ENCODE measurements at regions of chr6 and their contacts with region 1.

Region 1: DNA sequence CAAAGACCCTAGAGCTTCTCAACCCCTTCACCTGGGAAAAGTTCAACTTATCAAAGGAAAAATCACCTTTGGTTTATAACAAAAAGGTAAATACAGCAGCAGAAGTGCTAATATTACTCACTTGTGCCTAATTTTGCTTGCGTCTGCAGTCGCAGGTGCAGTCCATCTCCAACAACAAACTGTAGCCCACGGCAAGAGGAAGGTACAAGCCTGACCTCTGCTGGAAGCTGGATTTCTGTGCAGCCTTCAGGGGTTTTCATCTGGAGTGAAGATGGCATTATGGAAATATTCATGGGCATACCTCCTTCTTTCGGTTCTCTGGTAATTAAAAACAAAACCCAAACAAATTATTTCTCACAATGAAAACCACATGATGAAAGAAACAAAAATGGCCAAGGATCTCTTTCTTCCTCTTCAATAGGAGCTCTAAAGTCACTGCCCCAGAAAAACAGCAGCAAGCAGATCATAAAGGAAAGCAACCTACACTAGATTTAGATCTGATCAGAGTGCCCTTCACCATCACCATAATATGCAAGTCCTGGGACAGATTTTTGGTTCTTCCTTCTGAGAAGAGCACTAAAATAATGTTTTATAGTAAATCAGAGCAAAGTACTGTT is 7.8 kb downstream of the UBE3D start:
- DNase-seq: no peak
- ATAC-seq: peak; percentile 87
- H3K4me3 ChIP-seq: no peak overlapping the region
- H3K27ac ChIP-seq: no peak overlapping the region
- H3K4me1 ChIP-seq: peaks cover 3% of the 10 kb centered on the region; the same call in 1 of the 2 replicates
- H3K27me3 ChIP-seq: no peaks in the 10 kb centered on the region
- CTCF ChIP-seq: peak; percentile 87

Region 2: GRCh38 chr6:82247634-82248232 is 810.1 kb before region 1 on chr6 and contains the start of gene IBTK:
- CTCF ChIA-PET with region 1: no interaction called
- POLR2A ChIA-PET with region 1: no interaction called
- in situ Hi-C with region 1: no loop called
- intact Hi-C with region 1: loop called (anchors 2 kb)
- DNase-seq: peak; percentile 85
- ATAC-seq: peak; percentile 92
- H3K4me3 ChIP-seq: peak within 1 kb of the TSS; percentile 65 to 99
- H3K27ac ChIP-seq: peak within 1 kb of the TSS; percentile 99
- H3K4me1 ChIP-seq: peaks cover 34% of the 10 kb centered on the region; the same call in 1 of the 2 replicates
- H3K27me3 ChIP-seq: no peaks in the 10 kb centered on the region
- CTCF ChIP-seq: no peak
- total RNA-seq, gene IBTK: 73.2 TPM

Region 3: DNA sequence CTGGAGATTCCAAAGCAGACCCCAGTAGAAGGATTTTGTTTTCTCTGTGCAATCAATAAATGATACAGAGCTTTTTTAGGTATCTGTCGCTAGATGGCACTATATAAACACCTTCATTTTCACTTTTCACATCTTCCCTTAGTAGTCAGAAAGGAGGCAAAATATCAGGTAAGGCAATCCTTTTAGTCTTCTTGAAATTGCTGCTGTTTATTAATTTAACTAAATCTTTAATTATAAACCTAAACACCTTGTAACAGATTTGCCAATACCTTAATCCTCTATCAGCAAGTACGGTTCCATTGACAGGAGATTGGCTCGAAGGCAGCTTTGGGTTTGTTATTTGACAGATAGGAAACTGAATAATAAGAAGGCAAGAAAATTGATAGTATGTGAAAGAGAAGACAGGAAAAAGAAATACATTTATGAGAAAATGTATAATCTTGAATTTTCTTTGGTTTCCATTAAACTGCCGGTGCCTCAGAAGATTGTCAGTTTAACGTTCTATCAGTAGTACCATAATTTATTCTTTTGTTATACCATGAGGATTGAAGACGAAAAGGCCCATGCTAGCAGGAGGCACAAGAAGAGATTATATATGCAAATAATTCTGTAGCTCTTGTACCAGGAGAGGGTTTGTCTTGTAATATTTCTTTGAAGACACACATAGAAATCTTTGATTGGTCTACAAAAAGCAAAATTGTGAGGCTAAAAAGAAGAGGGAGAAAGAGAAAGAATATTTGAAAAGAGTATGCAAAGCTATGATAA is 786.8 kb before region 1 on chr6:
- CTCF ChIA-PET with region 1: interaction called, 4 read pairs
- POLR2A ChIA-PET with region 1: no interaction called
- in situ Hi-C with region 1: no loop called
- intact Hi-C with region 1: loop called (anchors 5 kb)
- DNase-seq: no peak
- ATAC-seq: no peak; the same call in 1 of the 2 replicates
- H3K4me3 ChIP-seq: no peak overlapping the region
- H3K27ac ChIP-seq: no peak overlapping the region
- H3K4me1 ChIP-seq: no peaks in the 10 kb centered on the region
- H3K27me3 ChIP-seq: no peaks in the 10 kb centered on the region
- CTCF ChIP-seq: peak; percentile 64; the same call in 1 of the 2 replicates

Region 4: GRCh38 chr6:83086751-83087150 is 28.9 kb after region 1 on chr6:
- CTCF ChIA-PET with region 1: no interaction called
- POLR2A ChIA-PET with region 1: no interaction called
- in situ Hi-C with region 1: no loop called
- intact Hi-C with region 1: no loop called
- DNase-seq: no peak
- ATAC-seq: no peak
- H3K4me3 ChIP-seq: no peak overlapping the region
- H3K27ac ChIP-seq: no peak overlapping the region
- H3K4me1 ChIP-seq: no peaks in the 10 kb centered on the region; the same call in 1 of the 2 replicates
- H3K27me3 ChIP-seq: no peaks in the 10 kb centered on the region
- CTCF ChIP-seq: no peak

Region 5: GRCh38 chr6:83231146-83231545 is 173.3 kb after region 1 on chr6:
- CTCF ChIA-PET with region 1: no interaction called
- POLR2A ChIA-PET with region 1: no interaction called
- in situ Hi-C with region 1: no loop called
- intact Hi-C with region 1: no loop called
- DNase-seq: no peak
- ATAC-seq: no peak
- H3K4me3 ChIP-seq: no peak overlapping the region
- H3K27ac ChIP-seq: no peak overlapping the region
- H3K4me1 ChIP-seq: no peaks in the 10 kb centered on the region
- H3K27me3 ChIP-seq: no peaks in the 10 kb centered on the region
- CTCF ChIP-seq: no peak